Activated T-helper 1 cell treated with anti-CD3 and anti-CD28 coated beads, Interleukin-12 subunit alpha, Interleukin-12 subunit beta, Interleukin-2, Interleukin-4 antibody, amounts not matched to agents 30 ng/mL and 10 ng/mL and 1 ng/mL, durations not matched to agents 14 hours and 24 hours and 36 hours (primary cell): ENCODE measurements at regions of chr17 and their contacts with region 1.

Region 1: GRCh38 chr17:21126645-21127510 is at the start of gene DHRS7B:
- DNase-seq: peak; percentile 96
- H3K4me3 Mint-ChIP-seq: peak within 1 kb of the TSS; percentile 95
- H3K27ac Mint-ChIP-seq: peak within 1 kb of the TSS; percentile 95
- H3K4me1 Mint-ChIP-seq: peaks cover 44% of the 10 kb centered on the region
- H3K27me3 Mint-ChIP-seq: peaks cover 3% of the 10 kb centered on the region
- total RNA-seq, gene DHRS7B: 20.0 and 23.6 TPM in 2 replicates

Region 2: DNA sequence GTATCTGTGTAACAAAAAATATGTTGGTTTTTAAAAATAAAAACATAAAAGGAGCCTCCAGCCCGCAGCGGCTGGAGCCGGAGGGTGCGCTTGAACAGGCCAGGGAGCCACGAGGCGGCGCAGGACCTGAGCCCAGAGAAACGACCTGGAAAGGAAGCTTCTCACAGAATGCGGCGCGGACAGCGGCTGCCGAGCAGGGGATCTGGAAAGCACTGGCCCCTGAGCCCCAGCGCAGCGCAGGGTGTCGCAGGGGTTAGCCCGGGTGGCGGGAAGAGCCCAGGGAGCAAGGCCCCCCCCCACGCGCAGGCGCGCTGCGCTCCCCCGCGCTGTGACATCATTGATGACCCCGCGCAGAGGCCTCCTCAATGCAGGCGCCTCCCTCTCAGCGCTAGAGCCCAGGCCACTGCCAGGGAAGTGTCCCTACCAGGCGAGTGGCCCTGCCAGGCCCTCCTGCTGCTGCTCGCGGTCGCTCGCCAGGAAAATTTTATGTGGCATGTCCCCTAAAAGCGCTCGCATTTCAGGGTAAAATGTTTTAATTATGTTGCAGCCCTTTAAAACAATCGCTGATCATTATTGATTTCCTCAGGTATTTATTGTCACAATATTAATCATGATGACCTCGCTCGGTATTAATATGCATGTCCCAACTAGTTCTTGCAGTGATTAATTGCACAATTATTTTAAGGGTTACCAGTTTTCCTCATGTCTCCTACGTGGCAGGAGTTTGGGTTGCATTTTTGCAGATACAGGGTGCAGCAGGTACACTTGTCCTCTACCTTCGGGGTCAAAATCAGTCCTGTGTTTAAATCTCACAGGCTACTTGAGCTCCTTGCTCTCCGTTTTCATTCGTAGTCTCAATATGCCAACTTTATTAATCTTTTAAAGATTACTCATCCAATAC is 218.3 kb before region 1 on chr17:
- intact Hi-C with region 1: loop called (anchors 10 kb)
- DNase-seq: peak; percentile 73
- H3K4me3 Mint-ChIP-seq: peak overlapping the region; percentile 75
- H3K27ac Mint-ChIP-seq: peak overlapping the region; percentile 27
- H3K4me1 Mint-ChIP-seq: peaks cover 6% of the 10 kb centered on the region
- H3K27me3 Mint-ChIP-seq: peaks cover 14% of the 10 kb centered on the region

Region 3: DNA sequence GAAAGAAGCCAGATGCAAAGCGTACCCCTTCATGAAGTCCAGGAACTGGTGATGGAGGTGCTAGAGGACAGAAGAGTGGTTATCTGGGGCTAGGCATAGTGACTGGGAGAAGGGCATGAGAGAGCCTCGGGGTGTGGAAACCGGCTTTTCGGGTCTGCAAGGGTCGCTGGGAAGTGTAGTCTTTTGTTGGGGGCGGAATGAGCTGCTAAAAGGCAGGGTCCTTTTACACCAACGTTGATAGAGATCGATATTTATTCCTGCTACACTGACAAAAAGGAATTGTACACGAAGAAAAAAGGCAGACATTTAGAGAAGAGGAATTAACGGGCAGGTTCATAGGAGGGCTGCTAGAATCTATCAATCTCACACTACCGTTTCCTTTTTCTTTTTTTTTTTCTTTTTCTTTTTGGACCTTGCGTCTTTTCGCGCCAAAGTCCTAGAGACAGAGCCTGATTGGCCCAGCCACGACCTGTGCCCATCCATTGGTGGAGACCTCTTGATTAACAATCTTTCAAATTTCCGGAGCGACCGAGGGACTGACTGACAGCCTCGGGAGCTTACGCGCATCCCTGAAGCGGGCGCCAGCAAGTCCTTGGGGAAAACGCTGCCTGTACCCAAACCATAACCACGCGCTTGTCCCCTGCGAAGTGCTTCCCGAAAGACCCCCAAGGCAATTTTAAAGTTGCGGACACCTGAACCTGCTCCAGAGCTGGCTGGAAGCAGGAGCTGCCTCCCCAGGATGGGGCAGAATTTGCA is 27.8 kb before region 1 on chr17:
- intact Hi-C with region 1: loop called (anchors 1 kb)
- DNase-seq: peak; percentile 68
- H3K4me3 Mint-ChIP-seq: peak overlapping the region; percentile 92
- H3K27ac Mint-ChIP-seq: peak overlapping the region; percentile 88
- H3K4me1 Mint-ChIP-seq: peaks cover 27% of the 10 kb centered on the region
- H3K27me3 Mint-ChIP-seq: no peaks in the 10 kb centered on the region

Region 4: GRCh38 chr17:21252796-21253645 is 126.1 kb after region 1 on chr17 and contains the start of gene NATD1:
- intact Hi-C with region 1: loop called (anchors 1 kb)
- DNase-seq: peak; percentile 70
- H3K4me3 Mint-ChIP-seq: peak within 1 kb of the TSS; percentile 83
- H3K27ac Mint-ChIP-seq: peak within 1 kb of the TSS; percentile 23
- H3K4me1 Mint-ChIP-seq: peaks cover 7% of the 10 kb centered on the region
- H3K27me3 Mint-ChIP-seq: peaks cover 13% of the 10 kb centered on the region
- total RNA-seq, gene NATD1: 1.6 and 1.7 TPM in 2 replicates

Region 5: GRCh38 chr17:21275579-21276263 is 148.8 kb after region 1 on chr17:
- intact Hi-C with region 1: loop called (anchors 1 kb)
- DNase-seq: peak; percentile 92
- H3K4me3 Mint-ChIP-seq: peak overlapping the region; percentile 95
- H3K27ac Mint-ChIP-seq: peak overlapping the region; percentile 63
- H3K4me1 Mint-ChIP-seq: peaks cover 43% of the 10 kb centered on the region
- H3K27me3 Mint-ChIP-seq: peaks cover 3% of the 10 kb centered on the region

Region 6: DNA sequence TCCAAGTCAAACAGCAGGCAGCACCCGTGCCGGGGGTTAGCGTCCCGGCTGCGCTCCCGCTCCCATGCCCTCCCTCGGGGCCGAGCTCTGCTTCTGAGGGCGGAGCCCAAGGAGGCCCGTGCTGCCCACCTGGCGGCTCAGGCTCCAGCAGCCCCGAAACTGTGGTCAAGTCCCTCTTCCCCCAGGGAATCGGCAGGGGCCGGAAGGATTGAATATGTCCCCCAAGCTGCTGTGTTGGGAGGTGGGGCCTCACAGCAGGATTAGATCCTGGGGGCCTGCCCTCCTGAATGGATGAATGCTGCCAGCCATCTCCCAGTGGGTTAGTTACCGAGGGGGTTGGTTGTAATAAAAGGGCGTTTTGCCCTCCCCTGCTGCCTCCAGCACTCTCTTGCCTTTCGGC is 191.6 kb after region 1 on chr17:
- intact Hi-C with region 1: loop called (anchors 5 kb)
- DNase-seq: no peak
- H3K4me3 Mint-ChIP-seq: no peak overlapping the region
- H3K27ac Mint-ChIP-seq: no peak overlapping the region
- H3K4me1 Mint-ChIP-seq: no peaks in the 10 kb centered on the region
- H3K27me3 Mint-ChIP-seq: peaks cover 3% of the 10 kb centered on the region

Region 7: GRCh38 chr17:21457051-21458026 is 330.5 kb after region 1 on chr17:
- intact Hi-C with region 1: loop called (anchors 2 kb)
- DNase-seq: peak; percentile 85
- H3K4me3 Mint-ChIP-seq: no peak overlapping the region
- H3K27ac Mint-ChIP-seq: peak overlapping the region; percentile 64
- H3K4me1 Mint-ChIP-seq: peaks cover 10% of the 10 kb centered on the region
- H3K27me3 Mint-ChIP-seq: peaks cover 25% of the 10 kb centered on the region